Endothelial cell of umbilical vein (primary cell): ENCODE measurements at regions of chr4 and their contacts with region 1.

Region 1: DNA sequence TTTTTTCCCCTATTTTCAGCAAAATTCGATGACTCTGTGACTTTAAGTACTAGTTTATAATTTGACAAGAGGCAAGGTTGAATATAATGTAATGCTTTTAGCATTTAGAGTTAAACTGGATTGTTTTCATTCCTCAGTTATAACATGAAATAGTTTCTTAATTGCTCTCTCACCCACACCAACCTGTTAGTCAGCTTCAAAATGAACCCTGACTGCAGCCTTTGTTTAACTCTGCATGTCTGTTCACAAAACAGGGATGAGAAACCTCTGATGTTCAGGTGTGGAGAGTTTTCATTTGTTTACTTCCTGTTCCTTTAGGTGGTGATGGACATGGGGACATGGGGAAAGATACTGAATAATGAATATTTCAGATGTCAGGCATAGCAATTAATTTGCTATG is 49.9 kb upstream of the MND1 start:
- DNase-seq: no peak
- H3K4me3 ChIP-seq: no peak overlapping the region
- H3K27ac ChIP-seq: no peak overlapping the region
- H3K4me1 ChIP-seq: no peaks in the 10 kb centered on the region
- H3K27me3 ChIP-seq: no peaks in the 10 kb centered on the region
- CTCF ChIP-seq: no peak
- POLR2A ChIP-seq: no peak

Region 2: DNA sequence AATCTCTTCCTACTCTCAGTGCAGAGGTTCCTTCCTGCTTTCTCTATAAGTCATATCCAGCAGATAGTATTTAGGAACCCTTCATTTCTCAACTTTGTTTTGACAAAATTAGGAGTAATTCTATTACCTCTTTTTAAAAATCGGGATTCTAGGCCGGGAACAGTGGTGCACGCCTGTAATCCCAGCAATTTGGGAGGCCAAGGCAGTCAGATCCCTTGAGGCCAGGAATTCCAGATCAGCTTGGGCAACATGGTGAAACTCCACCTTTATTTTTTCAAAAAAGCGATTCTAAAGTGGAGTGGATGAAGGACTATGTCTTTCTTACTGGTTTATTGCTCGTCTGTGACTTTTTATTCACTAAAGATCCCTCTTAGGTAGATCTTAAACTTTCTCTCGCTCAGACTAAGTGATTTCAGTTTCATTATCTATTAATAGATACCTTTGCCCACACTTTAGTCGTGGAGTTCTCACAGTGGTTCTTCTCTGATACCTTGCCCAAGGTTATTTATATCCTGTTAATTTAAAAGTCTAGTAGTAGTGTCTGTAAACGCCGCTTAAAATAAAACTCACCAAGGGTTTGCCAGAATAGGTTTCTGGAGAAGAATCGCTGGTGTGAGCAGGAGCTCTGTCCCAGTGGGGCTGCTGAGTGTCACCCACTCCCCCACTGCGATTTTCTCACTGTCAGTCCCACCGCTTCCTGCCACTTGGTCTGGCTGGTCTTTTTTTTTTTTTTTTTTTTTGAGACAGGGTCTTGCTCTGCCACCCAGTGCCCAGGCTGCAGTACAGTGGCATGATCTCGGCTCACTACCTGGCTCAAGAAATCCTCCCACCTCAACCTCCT is 144.5 kb after region 1 on chr4:
- CTCF ChIA-PET with region 1: no interaction called
- POLR2A ChIA-PET with region 1: no interaction called
- dilution Hi-C with region 1: no loop called
- intact Hi-C with region 1: loop called (anchors 5 kb)
- DNase-seq: no peak
- H3K4me3 ChIP-seq: no peak overlapping the region
- H3K27ac ChIP-seq: no peak overlapping the region
- H3K4me1 ChIP-seq: no peaks in the 10 kb centered on the region
- H3K27me3 ChIP-seq: no peaks in the 10 kb centered on the region
- CTCF ChIP-seq: no peak
- POLR2A ChIP-seq: no peak